ENCODE measurements at regions of chr15 and their contacts with region 1.

Region 1: GRCh38 chr15:98658831-98659699 is 10.7 kb downstream of the IGF1R start:
- DNase-seq: peak; percentile 66
- ATAC-seq: peak; percentile 64
- H3K4me3 ChIP-seq: no peak overlapping the region
- H3K27ac ChIP-seq: no peak overlapping the region
- H3K4me1 ChIP-seq: peaks cover 99% of the 10 kb centered on the region
- H3K27me3 ChIP-seq: no peaks in the 10 kb centered on the region
- CTCF ChIP-seq: peak; percentile 89
- EP300 ChIP-seq: no peak
- POLR2A ChIP-seq: no peak
- RAD21 ChIP-seq: peak; percentile 60

Region 2: GRCh38 chr15:98523912-98524662 is 135.0 kb before region 1 on chr15:
- CTCF ChIA-PET with region 1: interaction called, 12 read pairs
- POLR2A ChIA-PET with region 1: no interaction called
- in situ Hi-C with region 1: loop called (anchors 5 kb)
- intact Hi-C with region 1: loop called (anchors 1 kb)
- DNase-seq: no peak
- ATAC-seq: peak; percentile 30
- H3K4me3 ChIP-seq: no peak overlapping the region; a peak in 1 of 6 replicates
- H3K27ac ChIP-seq: no peak overlapping the region
- H3K4me1 ChIP-seq: peaks cover 58% of the 10 kb centered on the region
- H3K27me3 ChIP-seq: peaks cover 0 to 22% of the 10 kb centered on the region in 2 experiments; a peak in 2 of 5 replicates
- CTCF ChIP-seq: no peak
- EP300 ChIP-seq: no peak
- POLR2A ChIP-seq: no peak
- RAD21 ChIP-seq: no peak